H1 (cell line): ENCODE measurements at regions of chr17 and their contacts with region 1.

Region 1: GRCh38 chr17:47615766-47616424 is 33.8 kb upstream of the KPNB1 start:
- DNase-seq: no peak
- H3K4me3 ChIP-seq: no peak overlapping the region
- H3K27ac ChIP-seq: no peak overlapping the region
- H3K4me1 ChIP-seq: no peaks in the 10 kb centered on the region; a peak in 1 of 7 replicates
- H3K27me3 ChIP-seq: no peaks in the 10 kb centered on the region
- CTCF ChIP-seq: peak in 2 of 3 experiments; percentile 47 to 53; a peak in 2 of 4 replicates
- EP300 ChIP-seq: no peak
- POLR2A ChIP-seq: no peak
- RAD21 ChIP-seq: peak; percentile 62 to 67

Region 2: DNA sequence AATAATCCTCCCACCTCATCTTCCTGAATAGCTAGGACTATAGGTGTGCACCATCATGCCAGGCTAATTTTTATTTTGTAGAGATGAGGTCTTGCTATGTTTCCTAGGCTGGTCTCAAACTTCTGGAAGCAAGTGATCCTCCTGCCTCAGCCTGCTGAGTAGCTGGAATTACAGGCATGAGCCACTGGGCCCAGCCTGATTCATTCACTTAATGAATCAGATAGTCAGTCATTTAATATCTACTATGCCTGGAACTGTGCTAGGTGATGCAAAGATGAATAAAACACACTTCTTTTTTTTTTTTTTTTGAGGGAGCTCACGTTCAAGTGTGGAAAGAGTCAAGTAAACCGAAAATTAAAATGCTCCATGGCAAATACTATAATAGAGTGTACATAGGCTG is 252.7 kb before region 1 on chr17:
- CTCF ChIA-PET with region 1: interaction called, 12 read pairs
- POLR2A ChIA-PET with region 1: no interaction called
- DNase-seq: no peak
- H3K4me3 ChIP-seq: no peak overlapping the region
- H3K27ac ChIP-seq: no peak overlapping the region
- H3K4me1 ChIP-seq: no peaks in the 10 kb centered on the region
- H3K27me3 ChIP-seq: no peaks in the 10 kb centered on the region
- CTCF ChIP-seq: no peak
- EP300 ChIP-seq: no peak
- POLR2A ChIP-seq: no peak
- RAD21 ChIP-seq: no peak

Region 3: DNA sequence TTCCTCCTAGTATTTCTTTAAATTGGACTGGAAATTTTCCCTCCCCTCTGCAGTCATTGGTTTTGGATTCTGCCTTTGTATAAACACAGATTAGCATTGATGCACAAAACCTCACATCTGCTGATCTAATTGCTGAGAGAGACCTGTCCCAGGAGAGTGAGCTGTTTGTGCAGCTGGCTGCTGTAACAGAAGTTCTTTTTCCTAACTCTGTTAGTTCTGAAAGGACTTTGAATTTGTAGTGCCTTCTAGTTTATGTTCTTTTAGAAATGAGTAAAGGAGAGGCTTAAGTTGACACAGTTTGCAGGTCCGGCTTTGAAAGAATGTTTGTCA is 11.3 kb before region 1 on chr17:
- CTCF ChIA-PET with region 1: interaction called, 22 read pairs
- POLR2A ChIA-PET with region 1: no interaction called
- DNase-seq: no peak
- H3K4me3 ChIP-seq: no peak overlapping the region
- H3K27ac ChIP-seq: no peak overlapping the region
- H3K4me1 ChIP-seq: no peaks in the 10 kb centered on the region
- H3K27me3 ChIP-seq: no peaks in the 10 kb centered on the region
- CTCF ChIP-seq: no peak
- EP300 ChIP-seq: no peak
- POLR2A ChIP-seq: no peak
- RAD21 ChIP-seq: no peak

Region 4: GRCh38 chr17:47628014-47628566 is 12.2 kb after region 1 on chr17:
- CTCF ChIA-PET with region 1: interaction called, 18 read pairs
- POLR2A ChIA-PET with region 1: interaction called, 5 read pairs
- DNase-seq: no peak
- H3K4me3 ChIP-seq: no peak overlapping the region
- H3K27ac ChIP-seq: no peak overlapping the region
- H3K4me1 ChIP-seq: no peaks in the 10 kb centered on the region
- H3K27me3 ChIP-seq: no peaks in the 10 kb centered on the region
- CTCF ChIP-seq: no peak
- EP300 ChIP-seq: no peak
- POLR2A ChIP-seq: no peak
- RAD21 ChIP-seq: no peak

Region 5: GRCh38 chr17:47649153-47649971 is 33.5 kb after region 1 on chr17 and contains the start of gene KPNB1:
- CTCF ChIA-PET with region 1: interaction called, 5 read pairs
- POLR2A ChIA-PET with region 1: interaction called, 10 read pairs
- DNase-seq: peak; percentile 96 to 99
- H3K4me3 ChIP-seq: peak within 1 kb of the TSS; percentile 79 to 99 (median 93)
- H3K27ac ChIP-seq: peak within 1 kb of the TSS; percentile 83
- H3K4me1 ChIP-seq: peaks cover 0 to 6% (median 4%) of the 10 kb centered on the region in 4 experiments; a peak in 5 of 7 replicates
- H3K27me3 ChIP-seq: no peaks in the 10 kb centered on the region
- CTCF ChIP-seq: no peak
- EP300 ChIP-seq: peak; percentile 10 to 79; a peak in 2 of 3 replicates
- POLR2A ChIP-seq: peak; percentile 3 to 81
- RAD21 ChIP-seq: no peak
- total RNA-seq, gene KPNB1: 625 and 635 TPM in 2 replicates